AG04449 (cell line): ENCODE measurements at regions of chr12 and their contacts with region 1.

Region 1: DNA sequence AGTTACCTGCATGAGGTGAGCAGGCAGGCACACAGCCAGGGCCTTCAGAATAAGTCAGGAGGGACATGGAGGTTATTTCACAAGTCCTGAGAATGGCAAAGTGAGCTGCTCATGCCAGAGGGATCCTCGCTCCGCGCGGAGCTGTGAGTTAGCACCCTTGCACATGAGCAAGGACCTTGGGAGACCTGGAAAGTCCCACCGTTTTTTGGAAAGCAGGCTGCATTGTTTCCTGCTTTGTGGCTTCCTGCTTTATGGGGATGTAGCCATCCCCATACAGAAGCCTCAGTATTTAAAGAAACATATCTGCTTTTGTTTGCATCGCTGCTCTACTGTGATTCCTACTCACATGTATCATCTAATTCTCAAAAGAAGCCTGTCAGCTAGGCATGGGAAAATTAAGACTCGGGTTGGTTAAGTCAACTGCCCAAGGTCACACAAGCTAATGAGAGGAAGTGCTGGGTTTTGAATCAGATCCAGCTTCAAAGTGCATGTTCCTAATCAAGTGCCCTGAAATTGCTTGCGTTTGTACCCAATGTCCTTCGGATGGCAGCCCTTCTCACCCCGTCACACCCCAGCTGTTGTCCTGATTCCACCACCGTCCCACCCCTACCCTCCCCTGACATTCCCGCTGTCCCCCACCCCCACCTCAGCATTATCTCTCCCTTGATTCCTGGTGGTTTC is 106.2 kb downstream of the CRACR2A start:
- DNase-seq: no peak
- H3K4me3 ChIP-seq: no peak overlapping the region
- CTCF ChIP-seq: no peak

Region 2: DNA sequence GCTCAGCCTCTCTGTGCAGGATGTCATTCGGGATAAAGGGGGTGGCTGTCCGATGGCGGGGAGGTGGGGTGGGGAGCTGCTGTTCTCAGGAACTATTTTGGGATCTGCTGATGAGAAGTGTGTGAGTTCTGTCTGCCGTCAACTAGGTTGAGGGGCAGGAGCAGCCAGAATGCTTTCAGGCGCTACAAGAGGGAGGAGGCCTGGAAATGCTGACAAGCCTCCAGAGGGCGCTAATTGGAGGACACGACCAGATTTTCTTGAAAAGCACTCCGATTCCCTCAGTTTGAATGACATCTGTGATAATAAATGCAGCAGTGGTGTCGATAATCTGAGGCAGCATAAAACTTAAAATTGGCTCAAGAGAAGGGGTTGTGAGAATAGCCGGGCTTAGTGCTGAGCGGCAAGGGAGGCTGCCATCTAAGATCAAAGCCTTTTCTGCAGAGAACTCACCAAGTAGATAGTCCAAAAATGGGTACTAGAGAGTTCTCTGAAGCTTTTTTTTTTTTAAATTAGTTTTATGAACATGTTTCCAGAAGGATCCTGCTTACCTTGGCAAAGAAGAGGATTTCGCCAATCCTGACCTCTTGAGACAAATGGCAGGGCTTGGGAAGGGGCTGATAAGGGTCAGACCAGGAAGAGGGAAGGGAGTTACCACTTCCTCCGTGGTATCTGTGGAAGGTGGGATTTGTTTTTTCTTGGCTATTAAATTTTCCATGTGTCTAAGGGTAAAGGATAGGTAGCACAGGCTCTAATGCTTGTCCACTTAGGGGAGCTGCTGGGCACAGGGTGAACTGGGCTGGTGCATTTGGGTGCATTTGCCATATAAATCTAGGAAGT is 11.8 kb after region 1 on chr12:
- CTCF ChIA-PET with region 1: interaction called, 10 read pairs
- POLR2A ChIA-PET with region 1: interaction called, 3 read pairs
- DNase-seq: no peak
- H3K4me3 ChIP-seq: no peak overlapping the region
- CTCF ChIP-seq: peak; percentile 53